PC-3 (cell line): ENCODE measurements at regions of chr11 and their contacts with region 1.

Region 1: GRCh38 chr11:102760355-102761035 is 19.9 kb downstream of the MMP10 start:
- DNase-seq: peak; percentile 97
- ATAC-seq: peak; percentile 71
- H3K4me3 ChIP-seq: no peak overlapping the region
- H3K27ac ChIP-seq: peak overlapping the region; percentile 9
- H3K4me1 ChIP-seq: peaks cover 44% of the 10 kb centered on the region
- H3K27me3 ChIP-seq: no peaks in the 10 kb centered on the region
- CTCF ChIP-seq: no peak

Region 2: GRCh38 chr11:102685338-102685737 is 75.2 kb before region 1 on chr11:
- CTCF ChIA-PET with region 1: no interaction called
- POLR2A ChIA-PET with region 1: no interaction called
- intact Hi-C with region 1: no loop called
- DNase-seq: no peak
- ATAC-seq: no peak
- H3K4me3 ChIP-seq: no peak overlapping the region
- H3K27ac ChIP-seq: no peak overlapping the region
- H3K4me1 ChIP-seq: no peaks in the 10 kb centered on the region
- H3K27me3 ChIP-seq: no peaks in the 10 kb centered on the region
- CTCF ChIP-seq: no peak

Region 3: DNA sequence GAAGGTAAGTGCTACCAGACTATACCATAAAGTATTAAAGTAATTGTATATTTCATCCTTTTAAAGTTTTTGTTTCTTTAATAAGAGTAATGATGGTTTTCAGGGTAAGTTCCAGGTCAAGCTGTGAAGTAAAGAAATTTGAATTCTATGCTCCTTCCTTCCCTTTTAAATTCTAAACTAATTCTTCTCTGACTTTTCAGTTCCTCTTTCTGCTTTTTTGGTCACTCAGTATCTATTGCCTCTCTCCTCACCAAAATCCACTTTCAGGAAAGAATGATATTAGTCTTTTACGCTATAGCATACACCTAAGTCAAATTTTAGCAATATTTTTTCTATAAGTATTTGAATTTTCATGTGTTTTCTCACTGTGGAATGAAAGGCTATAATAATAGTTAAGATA is 44.0 kb before region 1 on chr11:
- CTCF ChIA-PET with region 1: no interaction called
- POLR2A ChIA-PET with region 1: no interaction called
- intact Hi-C with region 1: no loop called
- DNase-seq: no peak
- ATAC-seq: no peak
- H3K4me3 ChIP-seq: no peak overlapping the region
- H3K27ac ChIP-seq: no peak overlapping the region
- H3K4me1 ChIP-seq: no peaks in the 10 kb centered on the region
- H3K27me3 ChIP-seq: peaks cover 58% of the 10 kb centered on the region
- CTCF ChIP-seq: no peak

Region 4: GRCh38 chr11:102749101-102749722 is 11.3 kb before region 1 on chr11:
- CTCF ChIA-PET with region 1: no interaction called
- POLR2A ChIA-PET with region 1: interaction called, 12 read pairs
- intact Hi-C with region 1: no loop called
- DNase-seq: no peak
- ATAC-seq: no peak
- H3K4me3 ChIP-seq: no peak overlapping the region
- H3K27ac ChIP-seq: no peak overlapping the region
- H3K4me1 ChIP-seq: no peaks in the 10 kb centered on the region
- H3K27me3 ChIP-seq: peaks cover 25% of the 10 kb centered on the region
- CTCF ChIP-seq: no peak

Region 5: GRCh38 chr11:102798012-102798746 is 37.7 kb after region 1 on chr11 and contains the start of gene MMP1:
- CTCF ChIA-PET with region 1: no interaction called
- POLR2A ChIA-PET with region 1: no interaction called
- intact Hi-C with region 1: loop called (anchors 5 kb)
- DNase-seq: peak; percentile 98
- ATAC-seq: peak; percentile 89
- H3K4me3 ChIP-seq: no peak within 1 kb of the TSS
- H3K27ac ChIP-seq: peak within 1 kb of the TSS; percentile 66
- H3K4me1 ChIP-seq: peaks cover 33% of the 10 kb centered on the region
- H3K27me3 ChIP-seq: no peaks in the 10 kb centered on the region
- CTCF ChIP-seq: no peak
- total RNA-seq, gene MMP1: 6.5 and 7.3 TPM in 2 replicates